ENCODE measurements at regions of chr1 and their contacts with region 1.

Region 1: DNA sequence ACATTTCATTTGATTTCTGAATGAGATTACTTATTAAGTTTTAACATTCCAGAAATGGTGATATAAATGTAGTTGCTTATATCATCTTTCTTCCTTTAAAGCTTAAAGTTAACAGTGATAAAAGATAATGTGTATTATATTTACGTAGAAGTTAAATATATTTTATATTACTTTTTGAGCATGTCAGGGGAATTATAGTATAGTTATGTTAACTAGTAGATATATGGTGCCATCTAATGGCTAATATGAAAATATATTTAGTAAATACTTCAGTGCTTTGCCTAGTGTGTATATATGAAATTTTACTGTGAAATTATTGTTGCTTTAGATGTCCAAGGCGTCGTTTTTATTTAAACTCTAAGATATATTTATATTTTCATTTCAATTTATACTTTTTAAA is 51.5 kb downstream of the SYT14 start:
- DNase-seq: peak; percentile 11
- H3K4me3 ChIP-seq: no peak overlapping the region
- H3K27ac ChIP-seq: no peak overlapping the region
- H3K4me1 ChIP-seq: peaks cover 5% of the 10 kb centered on the region
- H3K27me3 ChIP-seq: no peaks in the 10 kb centered on the region
- CTCF ChIP-seq: peak; percentile 18 to 34

Region 2: DNA sequence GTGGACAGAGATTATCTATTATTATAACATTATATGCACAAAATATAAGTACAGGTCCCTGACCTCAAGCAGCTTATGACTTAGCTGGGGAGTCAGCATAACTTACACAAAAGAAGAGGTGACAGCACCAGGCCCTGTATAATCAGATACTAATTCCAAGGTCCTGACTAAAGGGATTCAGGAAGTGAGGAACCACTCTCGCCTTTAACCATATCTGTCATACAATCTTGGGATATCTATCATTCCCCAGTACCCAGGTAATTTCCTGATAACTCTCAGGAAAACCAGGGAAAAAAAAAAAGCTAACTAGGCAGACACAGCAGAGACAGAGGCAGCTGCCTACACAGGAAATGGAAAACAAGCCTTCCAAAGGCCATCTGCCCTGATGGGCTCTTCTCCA is 484.5 kb before region 1 on chr1:
- CTCF ChIA-PET with region 1: no interaction called
- dilution Hi-C with region 1: no loop called
- in situ Hi-C with region 1: no loop called
- intact Hi-C with region 1: no loop called
- DNase-seq: peak; percentile 61
- H3K4me3 ChIP-seq: no peak overlapping the region
- H3K27ac ChIP-seq: no peak overlapping the region
- H3K4me1 ChIP-seq: peaks cover 12% of the 10 kb centered on the region
- H3K27me3 ChIP-seq: no peaks in the 10 kb centered on the region
- CTCF ChIP-seq: no peak

Region 3: DNA sequence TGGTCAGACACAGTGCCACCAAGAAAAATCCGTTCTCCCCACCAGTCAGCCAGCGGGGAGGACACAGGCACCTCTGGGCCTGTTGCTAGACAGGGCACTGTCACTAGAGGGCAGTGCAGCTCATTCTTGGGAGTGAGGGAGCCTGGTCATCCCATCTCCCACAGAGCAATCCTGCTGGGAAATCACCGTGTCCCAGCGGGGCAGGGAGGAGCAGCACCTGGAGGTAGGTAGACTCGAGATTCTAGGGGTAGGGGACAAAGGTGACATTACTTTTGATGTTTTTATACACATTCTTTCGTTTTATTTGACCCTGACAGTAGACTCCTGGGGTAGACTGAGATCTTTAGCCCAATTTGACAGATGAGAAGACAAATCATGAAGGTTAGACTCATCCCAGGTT is 412.7 kb before region 1 on chr1:
- CTCF ChIA-PET with region 1: no interaction called
- dilution Hi-C with region 1: no loop called
- in situ Hi-C with region 1: no loop called
- intact Hi-C with region 1: loop called (anchors 2 kb)
- DNase-seq: peak; percentile 76
- H3K4me3 ChIP-seq: no peak overlapping the region
- H3K27ac ChIP-seq: no peak overlapping the region
- H3K4me1 ChIP-seq: peaks cover 9% of the 10 kb centered on the region
- H3K27me3 ChIP-seq: no peaks in the 10 kb centered on the region
- CTCF ChIP-seq: peak; percentile 98

Region 4: DNA sequence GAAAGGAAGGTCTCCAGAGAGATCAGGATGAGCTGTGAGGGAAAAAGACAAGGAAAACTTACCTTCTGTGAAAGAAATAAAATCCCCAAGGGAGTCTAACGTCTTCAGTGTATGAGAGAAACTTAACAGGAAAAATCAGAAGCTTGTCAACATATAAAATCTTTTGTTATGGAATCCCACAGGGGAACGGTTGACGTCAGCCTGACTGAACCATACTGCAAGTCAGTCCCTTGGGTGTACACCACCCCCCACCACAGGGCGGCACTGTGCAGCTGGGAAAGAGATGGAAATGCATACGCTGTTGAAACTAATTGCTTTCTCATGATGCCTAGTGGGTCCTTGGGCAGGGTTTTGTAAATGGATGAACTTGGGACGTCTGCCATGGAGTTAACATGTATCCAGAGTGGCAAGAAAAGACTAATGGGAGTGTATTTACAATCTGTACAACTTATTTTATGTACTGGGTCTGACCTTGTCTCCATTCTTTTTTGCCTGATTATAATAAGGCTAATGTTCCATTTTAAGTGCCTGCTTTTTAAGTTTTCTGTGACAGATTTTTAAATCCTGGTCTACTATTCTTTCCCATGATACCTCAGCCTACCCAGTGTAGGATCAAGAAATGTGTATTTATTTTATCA is 139.1 kb before region 1 on chr1:
- CTCF ChIA-PET with region 1: no interaction called
- dilution Hi-C with region 1: loop called (anchors 5 kb)
- in situ Hi-C with region 1: loop called in 1 of 2 experiments (anchors 5 kb)
- intact Hi-C with region 1: no loop called
- DNase-seq: peak; percentile 81
- H3K4me3 ChIP-seq: no peak overlapping the region
- H3K27ac ChIP-seq: no peak overlapping the region
- H3K4me1 ChIP-seq: no peaks in the 10 kb centered on the region
- H3K27me3 ChIP-seq: no peaks in the 10 kb centered on the region
- CTCF ChIP-seq: peak; percentile 84 to 96

Region 5: GRCh38 chr1:209884665-209885117 is 104.8 kb before region 1 on chr1:
- CTCF ChIA-PET with region 1: no interaction called
- dilution Hi-C with region 1: no loop called
- in situ Hi-C with region 1: no loop called
- intact Hi-C with region 1: loop called (anchors 1 kb)
- DNase-seq: peak; percentile 99
- H3K4me3 ChIP-seq: no peak overlapping the region
- H3K27ac ChIP-seq: peak overlapping the region; percentile 96
- H3K4me1 ChIP-seq: peaks cover 39% of the 10 kb centered on the region
- H3K27me3 ChIP-seq: no peaks in the 10 kb centered on the region
- CTCF ChIP-seq: no peak

Region 6: GRCh38 chr1:209937996-209938959 is 51.2 kb before region 1 on chr1 and contains the start of gene SYT14:
- CTCF ChIA-PET with region 1: no interaction called
- dilution Hi-C with region 1: no loop called
- in situ Hi-C with region 1: no loop called
- intact Hi-C with region 1: loop called (anchors 2 kb)
- DNase-seq: peak; percentile 76
- H3K4me3 ChIP-seq: peak within 1 kb of the TSS; percentile 71 to 87 (median 82)
- H3K27ac ChIP-seq: peak within 1 kb of the TSS; percentile 70
- H3K4me1 ChIP-seq: peaks cover 5% of the 10 kb centered on the region
- H3K27me3 ChIP-seq: no peaks in the 10 kb centered on the region
- CTCF ChIP-seq: peak in 1 of 2 donors; percentile 32
- total RNA-seq, gene SYT14: 5.8 to 13.4 TPM

Region 7: DNA sequence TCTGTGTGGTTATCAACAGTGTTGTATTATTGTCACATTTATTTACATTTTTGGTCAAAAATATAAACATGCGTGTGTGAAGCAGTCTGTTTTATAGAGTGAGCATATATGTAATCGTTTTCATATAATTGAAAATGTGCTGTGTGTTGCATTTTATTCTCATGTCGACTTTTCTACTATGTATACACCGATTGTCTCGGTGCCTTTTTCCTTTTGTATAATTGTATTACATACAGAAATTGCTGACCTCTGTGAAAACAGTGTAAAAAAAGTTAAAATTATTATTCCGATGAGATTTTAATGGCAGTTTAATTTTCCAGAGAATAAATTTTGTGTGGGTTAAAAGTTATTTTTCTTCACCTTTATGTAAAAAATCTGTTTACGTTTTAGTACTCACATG is 180.7 kb after region 1 on chr1:
- CTCF ChIA-PET with region 1: no interaction called
- dilution Hi-C with region 1: no loop called
- in situ Hi-C with region 1: no loop called
- intact Hi-C with region 1: no loop called
- DNase-seq: no peak
- H3K4me3 ChIP-seq: no peak overlapping the region
- H3K27ac ChIP-seq: no peak overlapping the region
- H3K4me1 ChIP-seq: no peaks in the 10 kb centered on the region
- H3K27me3 ChIP-seq: no peaks in the 10 kb centered on the region
- CTCF ChIP-seq: no peak

Measured in mammary epithelial cell (primary cell).